ENCODE measurements at regions of chr15 and their contacts with region 1.

Region 1: DNA sequence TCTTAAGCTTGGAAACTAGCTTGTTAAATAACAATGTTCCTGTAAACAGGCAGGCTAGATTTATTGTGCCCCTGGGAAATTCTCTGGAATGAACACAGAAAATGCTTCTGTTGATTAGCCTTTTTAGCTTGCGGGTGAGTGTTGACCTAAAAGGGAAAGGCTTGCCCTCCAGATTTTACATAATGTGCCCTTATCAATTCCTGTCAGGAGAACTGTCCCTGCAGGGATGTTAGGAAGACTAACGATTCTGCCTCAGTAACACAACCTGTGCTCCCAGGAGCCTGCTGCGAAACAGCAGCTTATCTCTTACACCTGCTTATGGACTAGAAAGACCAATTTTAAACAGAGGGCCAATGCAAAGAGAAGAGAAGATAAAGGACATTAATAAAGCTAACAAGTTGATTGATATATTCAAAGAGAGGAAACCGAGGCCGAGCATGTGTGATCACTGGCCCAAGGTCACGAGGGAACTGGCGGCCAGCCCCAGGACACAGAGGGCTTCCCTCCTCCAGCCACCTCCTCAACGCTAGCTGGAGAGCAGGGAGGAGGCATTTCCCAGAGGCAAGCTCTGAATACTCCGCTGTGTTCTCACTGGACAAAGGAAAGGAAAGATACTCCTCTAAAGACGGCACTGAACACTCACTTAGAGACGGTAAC is 48.4 kb upstream of the TJP1 start:
- DNase-seq: no peak

Region 2: DNA sequence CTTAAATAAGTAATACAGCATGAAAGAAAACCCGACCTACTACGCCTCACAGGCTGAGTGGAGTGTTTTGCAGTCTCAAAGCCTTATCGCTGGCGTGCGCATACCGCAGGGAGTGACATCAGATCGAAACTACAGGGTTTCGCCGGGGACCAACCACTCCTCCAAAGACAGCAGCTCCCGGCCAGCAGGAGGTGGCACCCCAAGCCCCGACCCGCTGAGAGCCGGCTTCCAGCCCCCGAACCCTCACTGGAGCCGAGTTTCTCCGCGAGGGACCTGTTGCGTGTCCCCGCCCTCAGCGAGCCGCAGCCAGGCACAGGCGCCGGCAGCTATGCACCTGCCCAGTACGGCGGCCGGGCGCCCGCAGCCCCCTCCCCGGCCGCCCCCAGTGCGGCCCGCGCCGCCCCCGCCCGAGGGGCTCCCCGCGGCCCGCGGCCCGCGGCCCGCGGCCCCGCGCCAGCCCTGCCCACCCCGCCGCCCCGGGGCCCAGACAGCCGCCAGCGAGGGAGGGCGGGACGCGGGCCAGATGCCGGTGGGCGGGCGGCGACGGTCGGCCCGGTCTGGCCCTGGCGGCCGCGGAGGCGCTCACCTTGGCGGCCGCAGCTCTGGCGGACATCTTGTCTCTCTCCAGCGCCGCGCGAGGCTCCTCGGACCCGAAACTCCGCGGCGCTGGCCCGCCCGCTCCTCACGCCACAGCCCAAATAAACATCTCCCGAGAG is 49.0 kb before region 1 on chr15:
- intact Hi-C with region 1: loop called (anchors 2 kb)
- DNase-seq: peak; percentile 86

Region 3: GRCh38 chr15:29835301-29835700 is 35.3 kb before region 1 on chr15:
- intact Hi-C with region 1: loop called (anchors 5 kb)
- DNase-seq: no peak

Region 4: GRCh38 chr15:29904757-29905417 is 34.3 kb after region 1 on chr15:
- intact Hi-C with region 1: no loop called
- DNase-seq: no peak

Region 5: GRCh38 chr15:30859091-30859874 is 988.7 kb after region 1 on chr15:
- intact Hi-C with region 1: no loop called
- DNase-seq: no peak